Ovary (tissue), 10 donors: ENCODE measurements at regions of chr6 and their contacts with region 1.

Region 1: GRCh38 chr6:153002607-153003365 is at the start of gene MTRF1L:
- DNase-seq: peak; percentile 92 to 96 (median 94)
- H3K4me3 ChIP-seq: peak within 1 kb of the TSS; percentile 59
- H3K27ac ChIP-seq: peak within 1 kb of the TSS; percentile 68 to 76
- H3K4me1 ChIP-seq: peaks cover 7% of the 10 kb centered on the region
- H3K27me3 ChIP-seq: no peaks in the 10 kb centered on the region
- CTCF ChIP-seq: no peak
- EP300 ChIP-seq: peak; percentile 78
- POLR2A ChIP-seq: peak; percentile 72
- total RNA-seq, gene MTRF1L: 8.4 to 18.1 (median 16.2) TPM

Region 2: GRCh38 chr6:152982768-152983636 is 19.8 kb before region 1 on chr6 and contains the start of gene FBXO5:
- intact Hi-C with region 1: loop called in 1 of 4 experiments (anchors 2 kb)
- DNase-seq: peak; percentile 97 to 99 (median 97)
- H3K4me3 ChIP-seq: peak within 1 kb of the TSS; percentile 74
- H3K27ac ChIP-seq: peak within 1 kb of the TSS; percentile 61 to 88
- H3K4me1 ChIP-seq: peaks cover 5% of the 10 kb centered on the region
- H3K27me3 ChIP-seq: no peaks in the 10 kb centered on the region
- CTCF ChIP-seq: no peak
- EP300 ChIP-seq: peak; percentile 82
- POLR2A ChIP-seq: peak; percentile 39
- total RNA-seq, gene FBXO5: 2.9 to 10.4 (median 6.7) TPM

Region 3: DNA sequence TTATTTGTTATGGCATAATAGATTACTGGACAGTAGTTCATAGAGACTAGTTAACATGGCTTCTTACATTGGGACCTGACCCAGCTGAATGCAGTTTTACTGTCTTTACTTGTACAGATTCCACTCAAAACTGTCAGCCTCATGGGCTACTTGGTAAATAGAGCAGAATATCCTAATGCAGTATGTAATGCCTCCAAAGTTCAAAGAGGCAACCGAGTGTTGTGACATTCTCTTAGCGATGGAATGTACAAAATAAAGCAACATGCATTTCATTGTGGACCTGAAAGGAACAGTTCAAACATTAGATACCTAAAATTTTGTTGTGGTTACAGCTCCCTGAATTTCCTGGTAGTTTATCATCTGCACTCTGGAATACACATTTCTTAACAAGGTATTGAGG is 157.4 kb after region 1 on chr6:
- intact Hi-C with region 1: no loop called
- DNase-seq: no peak
- H3K4me3 ChIP-seq: no peak overlapping the region
- H3K27ac ChIP-seq: no peak overlapping the region
- H3K4me1 ChIP-seq: no peaks in the 10 kb centered on the region
- H3K27me3 ChIP-seq: no peaks in the 10 kb centered on the region
- CTCF ChIP-seq: no peak
- EP300 ChIP-seq: no peak
- POLR2A ChIP-seq: no peak

Region 4: DNA sequence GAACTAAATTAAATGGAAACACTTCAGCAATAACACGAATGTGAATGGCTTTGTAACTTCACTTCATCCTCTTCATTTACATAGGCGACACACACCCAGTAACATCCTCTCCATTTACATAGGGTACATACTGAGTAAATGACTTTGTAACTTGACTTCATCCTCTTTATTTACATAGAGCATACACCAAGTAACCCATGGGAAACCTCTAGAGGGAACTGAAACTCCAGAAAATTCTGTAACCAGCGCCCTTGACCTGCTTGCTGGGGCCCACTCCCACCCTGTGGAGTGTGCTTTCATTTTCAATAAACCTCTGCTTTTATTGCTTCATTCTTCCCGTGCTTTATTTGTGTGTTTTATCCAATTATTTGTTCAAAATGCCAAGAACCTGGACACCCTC is 954.6 kb after region 1 on chr6:
- intact Hi-C with region 1: no loop called
- DNase-seq: no peak
- H3K4me3 ChIP-seq: no peak overlapping the region
- H3K27ac ChIP-seq: no peak overlapping the region
- H3K4me1 ChIP-seq: no peaks in the 10 kb centered on the region
- H3K27me3 ChIP-seq: no peaks in the 10 kb centered on the region
- CTCF ChIP-seq: no peak
- EP300 ChIP-seq: no peak
- POLR2A ChIP-seq: no peak